ENCODE measurements at regions of chrX and their contacts with region 1.

Region 1: GRCh38 chrX:40169193-40170101 is 71.7 kb upstream of the BCOR start:
- DNase-seq: peak in 8 of 9 donors; percentile 65 to 81 (median 74)
- ATAC-seq: peak; percentile 79
- H3K4me3 ChIP-seq: peak overlapping the region; percentile 51
- H3K4me3 Mint-ChIP-seq: peak overlapping the region; percentile 86 to 94 (median 90)
- H3K27ac ChIP-seq: peak overlapping the region; percentile 98
- H3K27ac Mint-ChIP-seq: peak overlapping the region; percentile 96 to 99 (median 98)
- H3K4me1 ChIP-seq: peaks cover 14 to 31% of the 10 kb centered on the region in 2 donors
- H3K4me1 Mint-ChIP-seq: peaks cover 17 to 64% (median 40%) of the 10 kb centered on the region in 7 donors
- H3K27me3 ChIP-seq: no peaks in the 10 kb centered on the region
- H3K27me3 Mint-ChIP-seq: no peaks in the 10 kb centered on the region

Region 2: GRCh38 chrX:39772057-39772832 is 397.2 kb before region 1 on chrX:
- CTCF ChIA-PET with region 1: no interaction called
- POLR2A ChIA-PET with region 1: interaction called, 5 read pairs
- intact Hi-C with region 1: loop called in 1 of 2 experiments (anchors 2 kb)
- DNase-seq: peak in 6 of 9 donors; percentile 18 to 52 (median 30)
- ATAC-seq: peak; percentile 63
- H3K4me3 ChIP-seq: peak overlapping the region; percentile 17
- H3K4me3 Mint-ChIP-seq: peak overlapping the region; percentile 43 to 80 (median 74)
- H3K27ac ChIP-seq: peak overlapping the region; percentile 43
- H3K27ac Mint-ChIP-seq: peak overlapping the region; percentile 86 to 98 (median 94)
- H3K4me1 ChIP-seq: peaks cover 26 to 32% of the 10 kb centered on the region in 2 donors
- H3K4me1 Mint-ChIP-seq: peaks cover 20 to 50% (median 43%) of the 10 kb centered on the region in 7 donors
- H3K27me3 ChIP-seq: no peaks in the 10 kb centered on the region
- H3K27me3 Mint-ChIP-seq: no peaks in the 10 kb centered on the region

Region 3: GRCh38 chrX:40078489-40079227 is 90.8 kb before region 1 on chrX:
- CTCF ChIA-PET with region 1: no interaction called
- POLR2A ChIA-PET with region 1: no interaction called
- intact Hi-C with region 1: no loop called
- DNase-seq: no peak
- ATAC-seq: no peak
- H3K4me3 ChIP-seq: no peak overlapping the region
- H3K4me3 Mint-ChIP-seq: no peak overlapping the region
- H3K27ac ChIP-seq: no peak overlapping the region
- H3K27ac Mint-ChIP-seq: peak overlapping the region in 6 of 9 donors; percentile 28 to 80 (median 58)
- H3K4me1 ChIP-seq: peaks cover 5 to 10% of the 10 kb centered on the region in 2 donors
- H3K4me1 Mint-ChIP-seq: peaks cover 4 to 48% (median 31%) of the 10 kb centered on the region in 7 donors
- H3K27me3 ChIP-seq: no peaks in the 10 kb centered on the region
- H3K27me3 Mint-ChIP-seq: no peaks in the 10 kb centered on the region

Region 4: DNA sequence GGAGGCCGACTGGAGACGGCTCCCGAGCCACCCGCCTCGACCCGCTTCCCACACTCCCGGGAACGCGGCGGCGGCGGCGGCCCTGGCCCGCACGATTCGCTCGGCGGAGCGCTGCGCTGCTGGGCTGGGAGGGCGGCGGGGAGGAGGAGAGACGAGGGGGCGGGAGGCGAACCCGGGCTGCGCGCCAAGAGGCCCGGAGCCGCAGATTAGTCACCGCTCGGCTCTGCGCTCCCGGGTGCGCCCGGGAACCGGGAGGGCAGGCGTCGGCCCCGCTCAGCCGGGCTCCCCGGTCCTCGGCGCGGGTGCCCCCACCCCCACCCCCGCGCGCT is 60.5 kb before region 1 on chrX:
- CTCF ChIA-PET with region 1: no interaction called
- POLR2A ChIA-PET with region 1: interaction called, 32 read pairs
- intact Hi-C with region 1: no loop called
- DNase-seq: peak in 5 of 9 donors; percentile 44 to 64 (median 51)
- ATAC-seq: peak; percentile 59
- H3K4me3 ChIP-seq: peak overlapping the region; percentile 43
- H3K4me3 Mint-ChIP-seq: peak overlapping the region in 9 of 10 donors; percentile 54 to 87 (median 73)
- H3K27ac ChIP-seq: peak overlapping the region; percentile 23
- H3K27ac Mint-ChIP-seq: no peak overlapping the region
- H3K4me1 ChIP-seq: no peaks in the 10 kb centered on the region
- H3K4me1 Mint-ChIP-seq: peaks cover 0 to 28% (median 13%) of the 10 kb centered on the region in 7 donors
- H3K27me3 ChIP-seq: no peaks in the 10 kb centered on the region
- H3K27me3 Mint-ChIP-seq: peaks cover 0 to 7% (median 0%) of the 10 kb centered on the region in 5 donors

Region 5: DNA sequence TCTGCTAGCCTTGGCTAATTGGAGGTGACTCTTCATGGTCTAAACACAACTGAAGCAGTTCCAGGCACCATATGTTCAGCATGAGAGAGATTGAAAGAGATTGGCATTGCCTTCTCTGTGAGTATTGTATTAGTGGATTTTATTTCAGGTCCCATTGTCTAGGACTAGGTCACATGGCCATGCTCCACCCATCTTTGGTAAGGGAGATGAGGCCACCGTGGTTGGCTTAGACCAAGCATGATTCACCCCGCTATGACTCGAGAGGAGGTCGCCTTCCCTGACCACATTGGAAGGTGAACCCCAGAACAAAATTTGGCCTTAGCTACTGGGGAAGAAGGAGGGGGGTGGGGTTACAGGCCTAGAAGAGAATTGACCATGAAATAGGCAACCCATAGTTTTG is 38.2 kb after region 1 on chrX:
- CTCF ChIA-PET with region 1: no interaction called
- POLR2A ChIA-PET with region 1: interaction called, 4 read pairs
- intact Hi-C with region 1: loop called in 1 of 2 experiments (anchors 5 kb)
- DNase-seq: peak in 1 of 9 donors; percentile 22
- ATAC-seq: peak; percentile 68
- H3K4me3 ChIP-seq: no peak overlapping the region
- H3K4me3 Mint-ChIP-seq: no peak overlapping the region
- H3K27ac ChIP-seq: no peak overlapping the region
- H3K27ac Mint-ChIP-seq: no peak overlapping the region
- H3K4me1 ChIP-seq: peaks cover under 1 to 2% of the 10 kb centered on the region in 2 donors
- H3K4me1 Mint-ChIP-seq: peaks cover 0 to 16% (median 14%) of the 10 kb centered on the region in 7 donors
- H3K27me3 ChIP-seq: no peaks in the 10 kb centered on the region
- H3K27me3 Mint-ChIP-seq: no peaks in the 10 kb centered on the region

Region 6: DNA sequence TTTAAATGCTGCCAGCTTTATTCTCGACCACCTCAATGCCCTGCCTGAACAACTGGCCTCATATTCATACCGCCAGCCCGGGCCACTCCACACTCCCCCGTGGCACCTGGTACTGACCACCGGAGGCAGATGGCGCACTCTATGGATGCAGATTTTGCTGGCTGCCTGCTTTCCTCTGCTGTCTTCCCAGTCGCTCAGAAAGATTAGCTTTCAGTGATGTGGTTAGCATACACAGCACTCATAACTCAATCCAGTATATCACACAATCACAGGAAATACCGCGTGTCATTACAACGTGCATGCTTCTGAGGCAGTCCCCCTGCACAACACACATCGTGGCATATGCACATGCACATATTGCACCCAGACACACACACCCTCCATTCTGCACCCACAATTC is 75.5 kb after region 1 on chrX:
- CTCF ChIA-PET with region 1: no interaction called
- POLR2A ChIA-PET with region 1: no interaction called
- intact Hi-C with region 1: no loop called
- DNase-seq: peak in 6 of 9 donors; percentile 9 to 37 (median 19)
- ATAC-seq: peak; percentile 45
- H3K4me3 ChIP-seq: no peak overlapping the region
- H3K4me3 Mint-ChIP-seq: peak overlapping the region; percentile 3 to 75 (median 26)
- H3K27ac ChIP-seq: no peak overlapping the region
- H3K27ac Mint-ChIP-seq: peak overlapping the region in 1 of 9 donors; percentile 21
- H3K4me1 ChIP-seq: peaks cover 0 to 13% of the 10 kb centered on the region in 2 donors
- H3K4me1 Mint-ChIP-seq: peaks cover 6 to 14% (median 13%) of the 10 kb centered on the region in 7 donors
- H3K27me3 ChIP-seq: no peaks in the 10 kb centered on the region
- H3K27me3 Mint-ChIP-seq: peaks cover 0 to 6% (median 2%) of the 10 kb centered on the region in 5 donors

Region 7: GRCh38 chrX:40607381-40607780 is 437.9 kb after region 1 on chrX:
- CTCF ChIA-PET with region 1: no interaction called
- POLR2A ChIA-PET with region 1: no interaction called
- intact Hi-C with region 1: no loop called
- DNase-seq: no peak
- ATAC-seq: no peak
- H3K4me3 ChIP-seq: no peak overlapping the region
- H3K4me3 Mint-ChIP-seq: no peak overlapping the region
- H3K27ac ChIP-seq: no peak overlapping the region
- H3K27ac Mint-ChIP-seq: no peak overlapping the region
- H3K4me1 ChIP-seq: no peaks in the 10 kb centered on the region
- H3K4me1 Mint-ChIP-seq: peaks cover 0 to 2% (median 0%) of the 10 kb centered on the region in 7 donors
- H3K27me3 ChIP-seq: no peaks in the 10 kb centered on the region
- H3K27me3 Mint-ChIP-seq: no peaks in the 10 kb centered on the region

Region 8: GRCh38 chrX:40735325-40736169 is 566.1 kb after region 1 on chrX and contains the start of gene MED14:
- CTCF ChIA-PET with region 1: no interaction called
- POLR2A ChIA-PET with region 1: no interaction called
- intact Hi-C with region 1: loop called in 1 of 2 experiments (anchors 5 kb)
- DNase-seq: peak; percentile 74 to 97 (median 96)
- ATAC-seq: peak; percentile 94
- H3K4me3 ChIP-seq: peak within 1 kb of the TSS; percentile 95
- H3K4me3 Mint-ChIP-seq: peak within 1 kb of the TSS; percentile 87 to 99 (median 95)
- H3K27ac ChIP-seq: peak within 1 kb of the TSS; percentile 93
- H3K27ac Mint-ChIP-seq: peak within 1 kb of the TSS; percentile 96 to 100 (median 98)
- H3K4me1 ChIP-seq: peaks cover 6 to 11% of the 10 kb centered on the region in 2 donors
- H3K4me1 Mint-ChIP-seq: peaks cover 9 to 71% (median 48%) of the 10 kb centered on the region in 7 donors
- H3K27me3 ChIP-seq: no peaks in the 10 kb centered on the region
- H3K27me3 Mint-ChIP-seq: no peaks in the 10 kb centered on the region
- total RNA-seq, gene MED14: 37.9 to 49.5 (median 44.3) TPM